Endothelial cell of umbilical vein (primary cell): ENCODE measurements at regions of chr5 and their contacts with region 1.

Region 1: DNA sequence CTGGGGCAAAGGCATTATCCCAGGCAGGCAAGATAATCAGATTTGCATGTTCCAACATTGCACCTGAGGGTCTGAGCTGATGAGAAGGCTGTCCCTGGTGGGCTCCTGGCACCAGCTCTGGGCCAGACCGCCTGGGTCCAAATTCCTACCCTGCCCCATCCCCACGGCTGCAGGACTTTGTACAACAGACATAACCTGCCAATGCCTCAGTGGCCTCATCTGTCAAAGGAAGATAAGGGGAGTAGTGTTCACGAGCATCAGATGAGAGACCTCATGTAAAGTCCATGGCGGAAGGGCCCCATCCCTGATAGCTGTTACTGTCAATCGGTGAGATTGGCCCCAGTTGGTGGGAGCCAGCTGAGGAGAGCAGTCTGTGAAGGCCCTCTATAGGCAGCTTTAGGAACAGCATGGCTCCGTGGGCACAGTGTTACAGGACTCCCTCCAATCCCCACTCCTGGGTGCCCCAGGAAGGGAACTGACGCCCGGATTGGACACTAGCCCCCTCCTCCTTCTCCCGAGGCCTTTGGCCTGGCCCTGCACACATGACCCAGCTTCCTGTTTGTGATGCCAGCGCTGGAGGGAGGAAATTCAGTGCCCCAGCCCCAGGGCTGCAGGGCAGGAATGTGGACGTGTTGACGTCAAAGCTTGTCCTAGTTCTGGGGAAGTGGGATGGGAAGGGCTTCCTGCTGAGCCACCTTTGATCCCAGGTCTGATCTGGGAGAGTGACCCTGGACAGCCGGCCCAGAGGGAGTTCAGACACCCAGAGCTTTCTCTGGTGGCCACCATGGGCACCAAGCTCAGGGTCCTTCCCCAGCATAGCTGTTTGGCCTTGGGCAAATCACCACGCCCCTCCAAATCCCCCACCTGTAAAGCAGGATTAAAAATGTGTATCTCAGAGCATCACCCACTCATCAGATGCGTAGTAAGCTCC is 56.2 kb downstream of the DUSP1 start:
- DNase-seq: peak; percentile 74
- H3K4me3 ChIP-seq: no peak overlapping the region
- H3K27ac ChIP-seq: peak overlapping the region; percentile 81
- H3K4me1 ChIP-seq: peaks cover 20% of the 10 kb centered on the region
- H3K27me3 ChIP-seq: no peaks in the 10 kb centered on the region
- CTCF ChIP-seq: peak; percentile 80 to 90
- POLR2A ChIP-seq: no peak

Region 2: GRCh38 chr5:172727551-172727950 is 12.8 kb after region 1 on chr5:
- CTCF ChIA-PET with region 1: interaction called, 11 read pairs
- POLR2A ChIA-PET with region 1: no interaction called
- dilution Hi-C with region 1: no loop called
- intact Hi-C with region 1: no loop called
- DNase-seq: no peak
- H3K4me3 ChIP-seq: no peak overlapping the region
- H3K27ac ChIP-seq: no peak overlapping the region
- H3K4me1 ChIP-seq: no peaks in the 10 kb centered on the region
- H3K27me3 ChIP-seq: no peaks in the 10 kb centered on the region
- CTCF ChIP-seq: no peak
- POLR2A ChIP-seq: no peak

Region 3: DNA sequence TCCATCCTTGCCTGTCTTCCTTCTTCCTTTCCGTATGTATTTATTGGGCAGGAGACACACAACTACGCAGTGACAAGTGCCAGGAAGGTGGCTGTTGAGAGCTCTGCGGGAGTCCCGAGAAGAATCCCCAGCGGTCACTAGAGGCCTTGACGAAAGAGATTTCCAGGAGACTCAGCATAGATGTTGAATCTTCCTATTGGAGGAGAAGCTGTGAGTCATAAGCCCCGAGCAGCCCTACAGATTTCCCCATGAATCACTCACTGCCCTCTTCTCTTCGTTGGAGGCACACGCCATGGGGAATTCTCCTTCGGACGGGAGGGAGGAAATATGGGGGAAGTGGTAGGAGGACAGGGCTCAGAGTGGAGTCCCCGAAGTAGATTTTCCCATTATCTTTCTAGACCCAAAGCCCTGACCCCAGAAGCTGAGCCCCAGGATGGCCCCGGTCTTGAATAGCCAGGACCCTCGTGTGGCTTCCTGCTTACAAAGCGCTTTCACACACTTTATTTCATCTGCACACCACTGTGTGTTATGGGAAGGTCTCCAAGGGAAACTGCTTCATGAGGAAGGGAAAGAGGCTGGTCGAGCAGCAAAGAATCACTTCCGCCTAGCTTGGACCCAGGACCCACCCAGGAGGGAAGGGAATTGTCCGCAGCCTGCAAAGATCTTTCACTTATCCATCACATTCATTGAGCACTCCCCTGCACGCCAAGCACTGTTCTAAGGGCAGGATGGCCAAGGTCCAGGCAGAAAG is 43.5 kb after region 1 on chr5:
- CTCF ChIA-PET with region 1: interaction called, 13 read pairs
- POLR2A ChIA-PET with region 1: no interaction called
- dilution Hi-C with region 1: no loop called
- intact Hi-C with region 1: no loop called
- DNase-seq: peak; percentile 75
- H3K4me3 ChIP-seq: no peak overlapping the region
- H3K27ac ChIP-seq: peak overlapping the region; percentile 53
- H3K4me1 ChIP-seq: peaks cover 8% of the 10 kb centered on the region
- H3K27me3 ChIP-seq: no peaks in the 10 kb centered on the region
- CTCF ChIP-seq: peak in 1 of 2 donors; percentile 4
- POLR2A ChIP-seq: no peak

Region 4: GRCh38 chr5:172855597-172856292 is 141.0 kb after region 1 on chr5:
- CTCF ChIA-PET with region 1: interaction called, 16 read pairs
- POLR2A ChIA-PET with region 1: no interaction called
- dilution Hi-C with region 1: no loop called
- intact Hi-C with region 1: loop called (anchors 1 kb)
- DNase-seq: peak; percentile 84
- H3K4me3 ChIP-seq: no peak overlapping the region
- H3K27ac ChIP-seq: peak overlapping the region; percentile 50
- H3K4me1 ChIP-seq: peaks cover 51% of the 10 kb centered on the region
- H3K27me3 ChIP-seq: no peaks in the 10 kb centered on the region
- CTCF ChIP-seq: no peak
- POLR2A ChIP-seq: no peak

Region 5: GRCh38 chr5:172897481-172898217 is 182.9 kb after region 1 on chr5:
- CTCF ChIA-PET with region 1: interaction called, 17 read pairs
- POLR2A ChIA-PET with region 1: interaction called, 3 read pairs
- dilution Hi-C with region 1: no loop called
- intact Hi-C with region 1: no loop called
- DNase-seq: peak; percentile 91
- H3K4me3 ChIP-seq: no peak overlapping the region
- H3K27ac ChIP-seq: peak overlapping the region; percentile 87
- H3K4me1 ChIP-seq: peaks cover 41% of the 10 kb centered on the region
- H3K27me3 ChIP-seq: no peaks in the 10 kb centered on the region
- CTCF ChIP-seq: no peak
- POLR2A ChIP-seq: peak; percentile 52

Region 6: DNA sequence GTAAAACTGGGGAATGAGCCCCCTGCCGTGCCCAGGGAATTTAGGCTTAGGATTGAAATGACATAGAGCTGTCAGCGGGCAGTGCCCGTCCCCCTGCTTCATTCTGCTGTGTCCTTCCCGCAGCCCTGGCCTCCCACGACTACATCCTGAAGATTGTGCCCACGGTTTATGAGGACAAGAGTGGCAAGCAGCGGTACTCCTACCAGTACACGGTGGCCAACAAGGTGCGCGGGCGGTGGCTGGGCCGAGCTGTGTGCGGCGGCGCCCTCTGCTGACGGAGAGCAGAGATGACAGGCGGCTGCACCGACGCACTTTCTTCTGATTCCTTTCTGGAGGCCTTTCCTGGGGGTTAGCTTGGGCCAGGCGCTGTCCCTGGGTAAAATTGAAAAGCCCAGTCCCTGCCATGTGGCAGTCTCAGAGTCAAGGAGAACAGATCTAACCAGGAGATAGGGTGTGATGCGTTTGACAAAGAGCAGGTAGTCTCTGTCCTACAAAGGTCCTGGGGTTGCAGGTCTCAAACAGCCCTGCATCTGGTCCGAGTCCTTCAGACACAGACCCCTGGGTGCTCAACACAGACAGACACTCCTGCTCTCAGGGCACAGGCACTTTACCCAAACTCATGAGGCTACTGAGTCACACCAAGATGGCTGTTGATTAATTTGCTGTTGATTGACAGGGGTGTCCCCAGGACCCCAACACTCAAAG is 217.7 kb after region 1 on chr5:
- CTCF ChIA-PET with region 1: interaction called, 413 read pairs
- POLR2A ChIA-PET with region 1: interaction called, 7 read pairs
- dilution Hi-C with region 1: no loop called
- intact Hi-C with region 1: loop called (anchors 1 kb)
- DNase-seq: peak; percentile 65
- H3K4me3 ChIP-seq: no peak overlapping the region
- H3K27ac ChIP-seq: peak overlapping the region; percentile 74
- H3K4me1 ChIP-seq: peaks cover 31% of the 10 kb centered on the region
- H3K27me3 ChIP-seq: no peaks in the 10 kb centered on the region
- CTCF ChIP-seq: peak; percentile 96 to 97
- POLR2A ChIP-seq: no peak

Region 7: GRCh38 chr5:173204185-173204979 is 489.6 kb after region 1 on chr5:
- CTCF ChIA-PET with region 1: no interaction called
- POLR2A ChIA-PET with region 1: no interaction called
- dilution Hi-C with region 1: no loop called
- intact Hi-C with region 1: loop called (anchors 1 kb)
- DNase-seq: peak; percentile 36
- H3K4me3 ChIP-seq: no peak overlapping the region
- H3K27ac ChIP-seq: no peak overlapping the region
- H3K4me1 ChIP-seq: no peaks in the 10 kb centered on the region
- H3K27me3 ChIP-seq: peaks cover 6 to 9% of the 10 kb centered on the region in 2 experiments
- CTCF ChIP-seq: peak; percentile 31 to 33
- POLR2A ChIP-seq: no peak